ENCODE measurements at regions of chr1 and their contacts with region 1.

Region 1: GRCh38 chr1:45686317-45687013 is at the start of gene GPBP1L1:
- DNase-seq: peak; percentile 99
- ATAC-seq: peak; percentile 72
- H3K4me3 ChIP-seq: peak within 1 kb of the TSS; percentile 65 to 99 (median 96)
- H3K4me3 Mint-ChIP-seq: peak within 1 kb of the TSS; percentile 100
- H3K27ac ChIP-seq: peak within 1 kb of the TSS; percentile 98
- H3K27ac Mint-ChIP-seq: peak within 1 kb of the TSS; percentile 100
- H3K4me1 ChIP-seq: peaks cover 23 to 30% of the 10 kb centered on the region in 2 donors
- H3K4me1 Mint-ChIP-seq: peaks cover 54% of the 10 kb centered on the region
- H3K27me3 ChIP-seq: no peaks in the 10 kb centered on the region
- H3K27me3 Mint-ChIP-seq: no peaks in the 10 kb centered on the region
- CTCF ChIP-seq: no peak
- total RNA-seq, gene GPBP1L1: 137 and 167 TPM in 2 replicates

Region 2: GRCh38 chr1:44631647-44632539 is 1054.6 kb before region 1 on chr1:
- CTCF ChIA-PET with region 1: no interaction called
- POLR2A ChIA-PET with region 1: no interaction called
- intact Hi-C with region 1: loop called (anchors 5 kb)
- DNase-seq: peak; percentile 93
- ATAC-seq: peak; percentile 76
- H3K4me3 ChIP-seq: peak overlapping the region; percentile 53 to 76 (median 69)
- H3K4me3 Mint-ChIP-seq: peak overlapping the region; percentile 96
- H3K27ac ChIP-seq: peak overlapping the region; percentile 89 to 91
- H3K27ac Mint-ChIP-seq: peak overlapping the region; percentile 99
- H3K4me1 ChIP-seq: peaks cover 18 to 23% of the 10 kb centered on the region in 2 donors
- H3K4me1 Mint-ChIP-seq: peaks cover 44% of the 10 kb centered on the region
- H3K27me3 ChIP-seq: no peaks in the 10 kb centered on the region
- H3K27me3 Mint-ChIP-seq: no peaks in the 10 kb centered on the region
- CTCF ChIP-seq: no peak

Region 3: GRCh38 chr1:44985747-44986359 is 700.6 kb before region 1 on chr1:
- CTCF ChIA-PET with region 1: no interaction called
- POLR2A ChIA-PET with region 1: no interaction called
- intact Hi-C with region 1: loop called (anchors 2 kb)
- DNase-seq: no peak
- ATAC-seq: no peak
- H3K4me3 ChIP-seq: peak overlapping the region; percentile 80 to 91 (median 87)
- H3K4me3 Mint-ChIP-seq: peak overlapping the region; percentile 100
- H3K27ac ChIP-seq: peak overlapping the region; percentile 34 to 66
- H3K27ac Mint-ChIP-seq: peak overlapping the region; percentile 86
- H3K4me1 ChIP-seq: peaks cover 9 to 19% of the 10 kb centered on the region in 2 donors
- H3K4me1 Mint-ChIP-seq: peaks cover 18% of the 10 kb centered on the region
- H3K27me3 ChIP-seq: no peaks in the 10 kb centered on the region
- H3K27me3 Mint-ChIP-seq: no peaks in the 10 kb centered on the region
- CTCF ChIP-seq: no peak

Region 4: GRCh38 chr1:45557422-45557944 is 129.0 kb before region 1 on chr1:
- CTCF ChIA-PET with region 1: no interaction called
- POLR2A ChIA-PET with region 1: interaction called, 10 read pairs
- intact Hi-C with region 1: no loop called
- DNase-seq: no peak
- ATAC-seq: no peak
- H3K4me3 ChIP-seq: no peak overlapping the region
- H3K4me3 Mint-ChIP-seq: no peak overlapping the region
- H3K27ac ChIP-seq: peak overlapping the region in 1 of 2 donors; percentile 34
- H3K27ac Mint-ChIP-seq: peak overlapping the region; percentile 50
- H3K4me1 ChIP-seq: peaks cover under 1 to 2% of the 10 kb centered on the region in 2 donors
- H3K4me1 Mint-ChIP-seq: peaks cover 11% of the 10 kb centered on the region
- H3K27me3 ChIP-seq: no peaks in the 10 kb centered on the region
- H3K27me3 Mint-ChIP-seq: no peaks in the 10 kb centered on the region
- CTCF ChIP-seq: no peak

Region 5: DNA sequence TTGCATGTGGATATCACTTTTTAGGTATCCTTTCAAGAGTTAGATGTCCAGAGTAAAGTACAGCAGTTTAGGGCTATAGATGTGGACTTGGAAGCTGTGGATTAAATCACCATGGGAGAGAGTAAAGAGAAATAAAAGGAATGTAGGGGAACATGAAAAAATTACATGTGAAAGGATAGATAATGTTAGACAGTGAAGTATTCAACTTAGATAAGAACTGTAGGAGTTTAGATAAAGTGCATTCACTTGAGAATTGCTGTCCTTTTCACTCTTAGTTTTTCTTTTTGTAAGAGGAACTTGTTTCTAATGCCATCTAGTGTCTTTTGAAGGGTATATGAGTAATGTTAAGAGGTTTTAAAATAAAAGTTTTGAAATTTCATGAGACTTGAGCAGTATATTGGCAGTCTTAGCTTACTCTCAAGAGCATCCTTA is 157.0 kb after region 1 on chr1:
- CTCF ChIA-PET with region 1: interaction called, 5 read pairs
- POLR2A ChIA-PET with region 1: no interaction called
- intact Hi-C with region 1: loop called (anchors 2 kb)
- DNase-seq: peak; percentile 25
- ATAC-seq: no peak
- H3K4me3 ChIP-seq: no peak overlapping the region
- H3K4me3 Mint-ChIP-seq: no peak overlapping the region
- H3K27ac ChIP-seq: no peak overlapping the region
- H3K27ac Mint-ChIP-seq: no peak overlapping the region
- H3K4me1 ChIP-seq: peaks cover 4 to 5% of the 10 kb centered on the region in 2 donors
- H3K4me1 Mint-ChIP-seq: peaks cover 10% of the 10 kb centered on the region
- H3K27me3 ChIP-seq: no peaks in the 10 kb centered on the region
- H3K27me3 Mint-ChIP-seq: no peaks in the 10 kb centered on the region
- CTCF ChIP-seq: peak; percentile 52

Region 6: GRCh38 chr1:46718727-46719622 is 1032.5 kb after region 1 on chr1 and contains the start of gene EFCAB14:
- CTCF ChIA-PET with region 1: no interaction called
- POLR2A ChIA-PET with region 1: no interaction called
- intact Hi-C with region 1: loop called (anchors 5 kb)
- DNase-seq: peak; percentile 99
- ATAC-seq: peak; percentile 99
- H3K4me3 ChIP-seq: peak within 1 kb of the TSS; percentile 84 to 95 (median 87)
- H3K4me3 Mint-ChIP-seq: peak within 1 kb of the TSS; percentile 89
- H3K27ac ChIP-seq: peak within 1 kb of the TSS; percentile 48 to 89
- H3K27ac Mint-ChIP-seq: peak within 1 kb of the TSS; percentile 95
- H3K4me1 ChIP-seq: peaks cover 24 to 25% of the 10 kb centered on the region in 2 donors
- H3K4me1 Mint-ChIP-seq: peaks cover 40% of the 10 kb centered on the region
- H3K27me3 ChIP-seq: no peaks in the 10 kb centered on the region
- H3K27me3 Mint-ChIP-seq: no peaks in the 10 kb centered on the region
- CTCF ChIP-seq: no peak
- total RNA-seq, gene EFCAB14: 90.0 and 98.8 TPM in 2 replicates

Measured in B cell (primary cell).